Vagina (tissue), 2 donors: ENCODE measurements at regions of chr2 and their contacts with region 1.

Region 1: GRCh38 chr2:217713395-217714286 is 289.2 kb downstream of the TNS1 start:
- DNase-seq: peak in 1 of 2 donors; percentile 86
- H3K4me3 ChIP-seq: no peak overlapping the region
- H3K27ac ChIP-seq: peak overlapping the region; percentile 75
- H3K4me1 ChIP-seq: peaks cover 52% of the 10 kb centered on the region
- H3K27me3 ChIP-seq: no peaks in the 10 kb centered on the region
- CTCF ChIP-seq: peak; percentile 70 to 96 (median 95)
- POLR2A ChIP-seq: no peak

Region 2: GRCh38 chr2:216680951-216681629 is 1032.6 kb before region 1 on chr2:
- intact Hi-C with region 1: loop called (anchors 1 kb)
- DNase-seq: no peak
- H3K4me3 ChIP-seq: no peak overlapping the region
- H3K27ac ChIP-seq: peak overlapping the region; percentile 90
- H3K4me1 ChIP-seq: peaks cover 49% of the 10 kb centered on the region
- H3K27me3 ChIP-seq: no peaks in the 10 kb centered on the region
- CTCF ChIP-seq: no peak
- POLR2A ChIP-seq: no peak

Region 3: DNA sequence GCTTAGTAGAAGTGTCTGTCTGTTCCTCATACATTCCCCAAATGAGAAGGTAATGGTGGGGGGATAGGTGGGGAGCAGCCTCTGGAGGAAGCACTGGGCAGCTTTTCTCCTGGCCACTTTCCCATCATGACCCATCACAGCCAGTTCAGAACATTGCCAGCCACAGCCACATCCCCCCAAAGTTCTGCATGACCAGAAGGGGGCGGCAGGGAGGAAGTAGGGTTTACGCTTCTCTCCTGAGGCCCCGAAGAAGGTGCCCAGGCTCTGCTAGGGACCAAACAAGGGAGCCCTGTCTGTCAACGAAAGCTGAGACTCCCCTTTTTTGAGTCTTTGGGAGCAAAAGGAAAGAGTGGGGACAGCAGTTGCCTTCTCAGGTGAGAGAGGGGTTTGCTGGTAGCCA is 1026.0 kb before region 1 on chr2:
- intact Hi-C with region 1: loop called (anchors 1 kb)
- DNase-seq: no peak
- H3K4me3 ChIP-seq: no peak overlapping the region
- H3K27ac ChIP-seq: peak overlapping the region; percentile 90
- H3K4me1 ChIP-seq: peaks cover 92% of the 10 kb centered on the region
- H3K27me3 ChIP-seq: no peaks in the 10 kb centered on the region
- CTCF ChIP-seq: no peak
- POLR2A ChIP-seq: no peak

Region 4: DNA sequence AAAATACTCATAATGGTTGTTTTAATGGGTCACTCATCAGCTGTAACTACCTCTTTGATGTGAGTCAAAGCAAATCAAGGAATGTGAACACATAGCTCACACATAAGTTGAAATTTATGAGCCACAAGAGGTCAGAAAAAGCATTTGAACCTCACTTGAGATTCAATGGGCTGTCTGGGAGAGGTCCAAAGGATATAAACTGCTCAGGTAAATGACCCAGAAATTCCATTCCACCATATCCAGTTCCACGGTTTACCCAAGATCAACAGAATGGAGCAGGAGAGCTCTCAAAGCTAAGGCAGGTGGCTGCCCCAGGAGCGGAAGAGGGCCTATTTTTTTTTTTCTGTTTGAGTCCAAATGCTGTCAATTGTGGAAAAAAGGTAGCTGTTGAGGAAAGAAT is 174.9 kb before region 1 on chr2:
- intact Hi-C with region 1: loop called (anchors 10 kb)
- DNase-seq: no peak
- H3K4me3 ChIP-seq: no peak overlapping the region
- H3K27ac ChIP-seq: no peak overlapping the region
- H3K4me1 ChIP-seq: no peaks in the 10 kb centered on the region
- H3K27me3 ChIP-seq: peaks cover 3% of the 10 kb centered on the region
- CTCF ChIP-seq: no peak
- POLR2A ChIP-seq: no peak

Region 5: GRCh38 chr2:217899231-217900009 is 185.8 kb after region 1 on chr2:
- intact Hi-C with region 1: no loop called
- DNase-seq: no peak
- H3K4me3 ChIP-seq: no peak overlapping the region
- H3K27ac ChIP-seq: peak overlapping the region; percentile 91
- H3K4me1 ChIP-seq: peaks cover 70% of the 10 kb centered on the region
- H3K27me3 ChIP-seq: no peaks in the 10 kb centered on the region
- CTCF ChIP-seq: peak in 2 of 3 experiments; percentile 41 to 58
- POLR2A ChIP-seq: no peak